Vagina (tissue), 2 donors: ENCODE measurements at regions of chr13 and their contacts with region 1.

Region 1: DNA sequence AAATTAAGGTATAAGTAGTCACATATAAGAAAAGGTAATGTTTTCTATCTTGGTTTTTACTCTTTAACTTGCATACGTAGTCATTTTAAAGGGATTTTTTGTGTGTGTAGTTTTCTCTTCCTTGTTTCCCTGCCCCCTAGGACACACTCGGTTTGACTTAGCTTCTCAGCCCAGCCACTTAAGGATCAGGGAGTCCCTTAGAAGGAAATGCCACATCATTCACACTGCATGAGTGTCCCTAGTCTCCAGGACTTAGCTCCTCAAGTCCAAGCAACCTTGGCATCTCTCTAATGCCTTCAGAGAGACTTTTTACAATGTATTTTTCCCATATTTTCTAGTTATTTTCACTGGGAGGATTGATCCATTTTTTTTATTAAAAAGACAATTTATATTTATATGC is 1407.7 kb downstream of the EFNB2 start:
- DNase-seq: no peak
- H3K4me3 ChIP-seq: no peak overlapping the region
- H3K27ac ChIP-seq: no peak overlapping the region
- H3K4me1 ChIP-seq: no peaks in the 10 kb centered on the region
- H3K27me3 ChIP-seq: no peaks in the 10 kb centered on the region
- CTCF ChIP-seq: no peak
- POLR2A ChIP-seq: no peak

Region 2: GRCh38 chr13:103625194-103625593 is 1502.5 kb before region 1 on chr13:
- intact Hi-C with region 1: no loop called
- DNase-seq: no peak
- H3K4me3 ChIP-seq: no peak overlapping the region
- H3K27ac ChIP-seq: no peak overlapping the region
- H3K4me1 ChIP-seq: no peaks in the 10 kb centered on the region
- H3K27me3 ChIP-seq: no peaks in the 10 kb centered on the region
- CTCF ChIP-seq: no peak
- POLR2A ChIP-seq: no peak

Region 3: DNA sequence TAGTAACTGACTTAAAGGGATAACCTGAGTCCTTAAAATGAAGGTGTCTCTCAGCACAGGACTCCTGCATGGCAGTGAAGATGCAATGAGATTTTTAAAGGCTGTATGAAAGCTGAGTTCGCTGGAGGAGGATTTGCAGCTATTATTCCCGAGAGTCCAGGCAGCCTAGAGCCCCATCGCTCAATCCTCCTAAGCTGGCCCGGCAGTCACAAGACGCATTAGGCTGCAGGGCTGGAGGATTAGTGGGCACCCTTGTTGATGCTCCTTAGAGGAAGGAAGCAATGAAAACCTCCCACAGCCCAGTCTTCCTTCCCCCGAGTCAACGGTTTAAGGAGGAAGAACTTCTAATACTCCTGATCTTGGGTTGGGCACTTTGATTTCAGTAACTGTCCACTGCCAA is 1168.2 kb after region 1 on chr13:
- intact Hi-C with region 1: loop called (anchors 5 kb)
- DNase-seq: no peak
- H3K4me3 ChIP-seq: no peak overlapping the region
- H3K27ac ChIP-seq: no peak overlapping the region
- H3K4me1 ChIP-seq: no peaks in the 10 kb centered on the region
- H3K27me3 ChIP-seq: no peaks in the 10 kb centered on the region
- CTCF ChIP-seq: no peak
- POLR2A ChIP-seq: no peak